H1 (cell line): ENCODE measurements at regions of chr1 and their contacts with region 1.

Region 1: DNA sequence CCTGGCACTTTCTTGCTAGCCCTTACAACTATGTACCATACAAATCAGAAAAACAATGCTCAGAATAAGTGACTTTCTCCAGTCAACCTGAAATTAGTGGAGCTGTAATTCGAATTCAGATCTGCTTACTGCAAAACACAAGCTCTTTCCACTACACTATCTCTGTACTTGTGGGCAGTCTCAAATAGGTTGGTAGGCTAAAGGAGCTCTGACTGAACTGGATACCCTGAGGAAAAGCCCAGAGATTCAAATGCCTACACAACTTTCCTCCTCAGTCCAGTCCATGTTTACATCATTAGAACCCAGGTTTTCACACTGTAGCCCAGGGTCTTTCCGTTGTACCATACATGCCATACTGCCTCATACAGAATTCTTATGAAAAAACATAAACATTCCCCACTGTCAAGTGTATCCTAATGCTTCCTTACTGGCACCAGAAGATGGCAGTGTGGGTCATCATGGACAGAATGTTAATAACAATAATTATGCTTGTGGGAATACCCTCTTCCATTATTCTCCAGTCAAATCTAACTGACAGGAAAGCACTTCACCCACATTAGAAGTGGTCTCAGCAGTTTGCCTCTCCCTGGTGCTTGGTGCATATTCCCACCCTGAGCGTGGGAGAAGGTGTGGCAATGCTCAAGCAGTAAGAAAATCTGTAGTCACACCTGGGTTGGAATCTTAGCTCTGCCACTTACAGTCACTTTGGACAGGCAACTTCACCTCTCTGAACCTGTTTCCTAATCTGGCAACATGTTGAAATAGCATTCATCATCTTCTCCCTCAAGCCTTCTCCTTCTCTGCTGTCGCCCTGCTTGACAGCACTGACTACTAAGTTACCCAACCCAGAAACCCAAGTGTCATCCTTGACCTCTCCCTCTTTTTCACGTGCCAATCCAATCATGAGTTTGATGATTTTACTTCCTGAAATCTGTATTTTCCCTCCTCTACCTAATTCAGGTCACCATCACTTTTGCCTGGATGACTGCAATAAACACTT is 14.4 kb upstream of the ZFYVE9 start:
- DNase-seq: no peak
- H3K4me3 ChIP-seq: no peak overlapping the region
- H3K27ac ChIP-seq: no peak overlapping the region
- H3K4me1 ChIP-seq: no peaks in the 10 kb centered on the region
- H3K27me3 ChIP-seq: no peaks in the 10 kb centered on the region; a peak in 1 of 7 replicates
- CTCF ChIP-seq: peak in 2 of 3 experiments; percentile 40 to 65; a peak in 2 of 4 replicates
- EP300 ChIP-seq: no peak
- POLR2A ChIP-seq: no peak
- RAD21 ChIP-seq: peak; percentile 66 to 67

Region 2: DNA sequence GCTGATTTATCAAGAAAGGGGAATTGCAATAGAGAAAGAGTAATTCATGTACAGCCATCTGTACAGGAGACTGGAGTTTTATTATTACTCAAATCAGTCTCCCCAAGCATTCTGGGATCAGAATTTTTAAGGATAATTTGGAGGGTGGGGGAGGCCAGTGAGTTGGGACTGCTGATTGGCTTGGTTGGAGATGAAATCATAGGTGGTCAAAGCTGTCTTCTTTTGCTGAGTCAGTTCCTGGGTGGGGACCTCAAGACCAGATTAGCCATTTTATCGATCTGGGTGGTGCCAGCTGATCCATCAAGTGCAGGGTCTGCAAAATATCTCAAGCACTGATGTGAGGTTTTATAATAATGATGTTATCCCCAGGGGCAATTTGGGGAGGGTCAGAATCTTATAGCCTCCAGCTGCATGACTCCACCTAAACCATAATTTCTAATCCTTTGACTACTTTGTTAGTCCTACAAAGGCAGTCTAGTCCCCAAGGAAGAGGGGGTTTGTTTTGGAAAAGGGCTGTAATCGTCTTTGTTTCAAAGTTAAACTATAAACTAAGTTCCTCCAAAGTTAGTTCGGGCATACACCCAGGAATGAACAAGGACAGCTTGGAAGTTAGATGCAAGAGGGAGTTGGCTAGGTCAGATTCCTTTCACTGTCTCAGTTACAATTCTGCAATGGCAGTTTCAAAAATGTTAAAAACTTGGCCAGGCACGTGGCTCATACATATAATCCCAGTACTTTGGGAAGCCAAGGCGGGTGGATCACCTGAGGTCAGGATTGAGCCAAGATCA is 120.1 kb before region 1 on chr1:
- CTCF ChIA-PET with region 1: no interaction called
- POLR2A ChIA-PET with region 1: no interaction called
- DNase-seq: no peak
- H3K4me3 ChIP-seq: no peak overlapping the region; a peak in 1 of 8 replicates
- H3K27ac ChIP-seq: peak overlapping the region; percentile 11; the same call in 1 of the 2 replicates
- H3K4me1 ChIP-seq: peaks cover 5 to 14% (median 12%) of the 10 kb centered on the region in 4 experiments; a peak in 6 of 7 replicates
- H3K27me3 ChIP-seq: no peaks in the 10 kb centered on the region
- CTCF ChIP-seq: no peak
- EP300 ChIP-seq: no peak
- POLR2A ChIP-seq: no peak
- RAD21 ChIP-seq: no peak

Region 3: DNA sequence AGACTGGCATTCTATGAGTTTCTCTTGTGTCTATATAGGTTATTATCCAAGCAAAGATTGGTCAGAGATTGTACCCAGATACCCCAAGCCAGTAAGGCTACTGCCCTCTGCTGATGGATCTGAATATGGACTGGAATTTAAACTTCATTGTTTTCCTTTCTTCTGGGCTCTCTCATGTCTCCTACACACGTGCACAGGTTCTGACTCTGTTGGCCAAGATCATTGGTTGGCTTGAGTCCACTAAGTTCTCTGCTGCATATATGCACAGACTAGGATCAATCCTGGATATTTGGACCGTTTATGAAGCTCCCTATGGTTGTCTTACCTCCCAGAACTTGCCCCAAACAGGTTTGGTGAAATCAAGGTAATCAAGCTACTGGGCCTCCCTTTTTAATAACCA is 168.9 kb after region 1 on chr1:
- CTCF ChIA-PET with region 1: interaction called, 12 read pairs
- POLR2A ChIA-PET with region 1: no interaction called
- DNase-seq: no peak
- H3K4me3 ChIP-seq: no peak overlapping the region
- H3K27ac ChIP-seq: no peak overlapping the region
- H3K4me1 ChIP-seq: no peaks in the 10 kb centered on the region
- H3K27me3 ChIP-seq: no peaks in the 10 kb centered on the region
- CTCF ChIP-seq: peak in 2 of 3 experiments; percentile 64 to 73; a peak in 3 of 4 replicates
- EP300 ChIP-seq: no peak
- POLR2A ChIP-seq: no peak
- RAD21 ChIP-seq: peak; percentile 77 to 81

Region 4: GRCh38 chr1:52306227-52307006 is 178.9 kb after region 1 on chr1:
- CTCF ChIA-PET with region 1: interaction called, 11 read pairs
- POLR2A ChIA-PET with region 1: no interaction called
- DNase-seq: no peak
- H3K4me3 ChIP-seq: no peak overlapping the region
- H3K27ac ChIP-seq: no peak overlapping the region
- H3K4me1 ChIP-seq: no peaks in the 10 kb centered on the region
- H3K27me3 ChIP-seq: no peaks in the 10 kb centered on the region
- CTCF ChIP-seq: no peak
- EP300 ChIP-seq: no peak
- POLR2A ChIP-seq: no peak
- RAD21 ChIP-seq: no peak

Region 5: GRCh38 chr1:52348704-52349300 is 221.3 kb after region 1 on chr1:
- CTCF ChIA-PET with region 1: interaction called, 11 read pairs
- POLR2A ChIA-PET with region 1: interaction called, 4 read pairs
- DNase-seq: peak; percentile 51 to 63
- H3K4me3 ChIP-seq: no peak overlapping the region
- H3K27ac ChIP-seq: no peak overlapping the region
- H3K4me1 ChIP-seq: peaks cover 1 to 12% (median 4%) of the 10 kb centered on the region in 4 experiments; a peak in 5 of 7 replicates
- H3K27me3 ChIP-seq: no peaks in the 10 kb centered on the region
- CTCF ChIP-seq: peak; percentile 71 to 84 (median 78)
- EP300 ChIP-seq: no peak
- POLR2A ChIP-seq: no peak
- RAD21 ChIP-seq: peak; percentile 90 to 94